ENCODE measurements at regions of chr17 and their contacts with region 1.

Region 1: DNA sequence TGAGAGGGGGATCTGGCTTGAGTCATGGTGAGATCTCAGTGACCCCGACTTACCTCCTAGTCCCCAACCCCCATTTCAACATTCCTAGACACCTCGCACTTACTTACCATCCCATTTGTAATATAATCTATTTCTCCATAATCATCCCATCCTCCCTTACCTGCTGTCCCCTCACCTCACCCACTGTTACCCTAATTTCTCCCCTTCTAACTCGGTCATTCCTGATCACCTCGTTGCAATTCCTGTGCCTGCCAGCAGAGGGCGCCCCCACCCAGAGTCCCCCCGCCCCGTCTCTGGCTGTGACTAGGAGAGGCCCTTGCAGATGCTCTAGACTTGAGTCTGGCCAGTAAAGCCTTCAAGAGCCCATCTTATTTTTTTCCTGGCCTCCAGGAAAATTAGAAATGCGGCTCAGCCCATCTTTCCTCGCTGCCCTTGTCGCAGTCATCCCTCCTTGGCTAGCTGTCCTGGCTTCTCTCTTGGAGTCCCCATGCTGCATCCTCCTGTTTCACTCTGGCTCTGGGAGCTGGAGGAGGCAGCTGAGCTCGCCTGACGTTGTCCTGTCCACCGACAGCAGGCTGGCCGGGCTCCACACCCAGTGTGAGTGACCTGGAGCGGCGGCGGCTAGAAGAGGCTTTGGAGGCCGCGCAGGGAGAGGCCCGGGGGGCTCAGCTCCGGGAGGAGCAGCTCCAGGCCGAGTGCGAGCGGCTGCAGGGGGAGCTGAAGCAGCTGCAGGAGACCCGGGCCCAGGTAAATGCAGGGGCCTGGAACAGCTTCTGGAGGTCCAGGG is 5.0 kb downstream of the TBKBP1 start:
- DNase-seq: peak; percentile 87
- H3K4me3 Mint-ChIP-seq: no peak overlapping the region
- H3K27ac Mint-ChIP-seq: peak overlapping the region; percentile 86
- H3K4me1 Mint-ChIP-seq: peaks cover 63% of the 10 kb centered on the region
- H3K27me3 Mint-ChIP-seq: peaks cover 3% of the 10 kb centered on the region

Region 2: GRCh38 chr17:47253541-47254402 is 445.2 kb before region 1 on chr17 and contains the start of gene ITGB3:
- CTCF ChIA-PET with region 1: no interaction called
- POLR2A ChIA-PET with region 1: no interaction called
- DNase-seq: peak; percentile 73
- H3K4me3 Mint-ChIP-seq: peak within 1 kb of the TSS; percentile 87
- H3K27ac Mint-ChIP-seq: no peak within 1 kb of the TSS
- H3K4me1 Mint-ChIP-seq: peaks cover 40% of the 10 kb centered on the region
- H3K27me3 Mint-ChIP-seq: peaks cover 62% of the 10 kb centered on the region
- total RNA-seq, gene ITGB3: 1.9 to 2.2 TPM

Region 3: GRCh38 chr17:47649153-47649971 is 49.6 kb before region 1 on chr17 and contains the start of gene KPNB1:
- CTCF ChIA-PET with region 1: interaction called, 8 read pairs
- POLR2A ChIA-PET with region 1: interaction called, 20 read pairs
- DNase-seq: peak; percentile 99
- H3K4me3 Mint-ChIP-seq: peak within 1 kb of the TSS; percentile 91
- H3K27ac Mint-ChIP-seq: peak within 1 kb of the TSS; percentile 96
- H3K4me1 Mint-ChIP-seq: peaks cover 50% of the 10 kb centered on the region
- H3K27me3 Mint-ChIP-seq: no peaks in the 10 kb centered on the region
- total RNA-seq, gene KPNB1: 329 to 334 TPM

Region 4: GRCh38 chr17:47708863-47709541 is 10.1 kb after region 1 on chr17:
- CTCF ChIA-PET with region 1: interaction called, 99 read pairs
- POLR2A ChIA-PET with region 1: interaction called, 210 read pairs
- DNase-seq: no peak
- H3K4me3 Mint-ChIP-seq: no peak overlapping the region
- H3K27ac Mint-ChIP-seq: no peak overlapping the region
- H3K4me1 Mint-ChIP-seq: peaks cover 60% of the 10 kb centered on the region
- H3K27me3 Mint-ChIP-seq: peaks cover 11% of the 10 kb centered on the region

Region 5: DNA sequence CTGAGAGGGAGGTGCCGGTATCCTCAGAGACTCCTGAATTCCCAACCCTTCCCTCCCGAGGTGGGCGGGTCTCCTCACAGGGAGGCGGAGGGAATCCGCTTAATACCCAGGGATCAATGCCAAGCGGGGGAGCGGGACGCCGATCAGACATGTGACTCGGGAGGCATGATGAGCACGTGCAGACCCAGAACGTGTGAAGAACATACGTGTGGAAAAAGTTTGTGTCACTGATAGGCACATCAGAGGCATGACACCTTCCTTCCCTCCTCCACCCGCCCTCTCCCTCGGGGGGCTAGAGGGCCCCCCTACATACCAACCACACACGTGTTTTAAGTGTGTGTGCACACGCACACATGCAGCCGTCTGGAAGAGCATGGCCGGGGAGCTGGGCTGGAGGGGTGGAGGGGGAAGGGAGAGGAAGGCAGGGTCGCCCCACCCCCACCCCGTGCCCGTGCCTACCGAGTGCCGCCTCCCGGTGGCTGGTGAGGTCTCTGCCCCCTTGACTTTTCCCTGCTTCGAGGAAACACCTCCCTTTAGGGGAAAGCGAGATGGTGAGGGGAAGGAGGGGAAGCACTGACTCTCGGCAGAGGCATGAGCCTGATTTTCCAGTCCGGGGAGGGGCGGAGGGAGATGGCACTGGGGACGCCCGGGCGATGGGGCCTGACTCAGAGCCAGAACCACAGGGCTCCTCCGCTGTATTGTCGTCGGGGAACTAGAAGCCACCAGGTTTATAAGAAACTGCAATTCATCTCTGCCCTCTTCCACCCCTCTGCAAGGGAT is 22.0 kb after region 1 on chr17:
- CTCF ChIA-PET with region 1: interaction called, 99 read pairs
- POLR2A ChIA-PET with region 1: interaction called, 463 read pairs
- DNase-seq: peak; percentile 93
- H3K4me3 Mint-ChIP-seq: peak overlapping the region; percentile 58
- H3K27ac Mint-ChIP-seq: peak overlapping the region; percentile 78
- H3K4me1 Mint-ChIP-seq: peaks cover 86% of the 10 kb centered on the region
- H3K27me3 Mint-ChIP-seq: peaks cover 2% of the 10 kb centered on the region

Region 6: GRCh38 chr17:47742319-47743181 is 43.6 kb after region 1 on chr17:
- CTCF ChIA-PET with region 1: interaction called, 116 read pairs
- POLR2A ChIA-PET with region 1: interaction called, 463 read pairs
- DNase-seq: peak; percentile 36
- H3K4me3 Mint-ChIP-seq: no peak overlapping the region
- H3K27ac Mint-ChIP-seq: peak overlapping the region; percentile 85
- H3K4me1 Mint-ChIP-seq: peaks cover 51% of the 10 kb centered on the region
- H3K27me3 Mint-ChIP-seq: no peaks in the 10 kb centered on the region

Region 7: DNA sequence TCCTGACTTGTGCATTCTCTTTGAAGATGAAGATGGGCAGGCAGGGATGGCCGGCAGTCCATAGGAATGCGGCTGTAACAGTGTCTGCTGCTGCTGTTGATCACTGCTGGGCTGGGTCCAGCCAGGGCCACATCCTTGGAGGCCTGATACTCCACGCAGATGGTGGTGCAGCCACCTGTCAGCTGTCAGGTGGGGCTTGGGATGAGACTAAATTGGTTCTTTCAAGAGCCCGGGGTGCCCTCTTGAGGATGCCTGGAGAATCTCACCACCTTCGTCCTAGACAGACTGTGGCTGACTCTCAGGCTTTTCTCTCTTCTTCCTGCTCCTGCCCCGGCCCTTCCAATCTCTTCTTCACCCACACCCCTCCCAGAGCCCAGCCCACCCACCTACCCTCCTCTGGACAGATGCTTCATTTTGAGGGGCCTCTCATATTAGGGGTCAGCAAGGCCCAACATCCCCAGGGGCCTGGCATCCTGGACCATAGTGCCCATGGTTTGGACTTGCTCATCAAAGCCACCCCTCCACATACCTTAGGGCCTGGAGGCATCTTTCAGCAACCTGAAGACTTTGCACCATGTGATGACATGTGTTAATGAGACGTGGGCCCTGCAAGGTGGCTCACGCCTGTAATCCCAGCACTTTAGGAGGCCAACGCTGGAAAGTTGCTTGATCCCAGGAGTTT is 103.5 kb after region 1 on chr17:
- CTCF ChIA-PET with region 1: interaction called, 10 read pairs
- POLR2A ChIA-PET with region 1: interaction called, 5 read pairs
- DNase-seq: peak; percentile 66
- H3K4me3 Mint-ChIP-seq: no peak overlapping the region
- H3K27ac Mint-ChIP-seq: no peak overlapping the region
- H3K4me1 Mint-ChIP-seq: no peaks in the 10 kb centered on the region
- H3K27me3 Mint-ChIP-seq: peaks cover 4% of the 10 kb centered on the region